Dorsolateral prefrontal cortex (tissue), 120 donors: ENCODE measurements at regions of chr11 and their contacts with region 1.

Region 1: GRCh38 chr11:95150946-95151684 is 61.5 kb downstream of the ENDOD1 start:
- DNase-seq: peak; percentile 89 to 95 (median 91)
- H3K4me3 ChIP-seq: peak overlapping the region; percentile 59 to 92 (median 74)
- H3K27ac ChIP-seq: peak overlapping the region; percentile 72 to 98 (median 93)
- H3K27me3 ChIP-seq: no peaks in the 10 kb centered on the region
- CTCF ChIP-seq: peak; percentile 73 to 99 (median 89)

Region 2: DNA sequence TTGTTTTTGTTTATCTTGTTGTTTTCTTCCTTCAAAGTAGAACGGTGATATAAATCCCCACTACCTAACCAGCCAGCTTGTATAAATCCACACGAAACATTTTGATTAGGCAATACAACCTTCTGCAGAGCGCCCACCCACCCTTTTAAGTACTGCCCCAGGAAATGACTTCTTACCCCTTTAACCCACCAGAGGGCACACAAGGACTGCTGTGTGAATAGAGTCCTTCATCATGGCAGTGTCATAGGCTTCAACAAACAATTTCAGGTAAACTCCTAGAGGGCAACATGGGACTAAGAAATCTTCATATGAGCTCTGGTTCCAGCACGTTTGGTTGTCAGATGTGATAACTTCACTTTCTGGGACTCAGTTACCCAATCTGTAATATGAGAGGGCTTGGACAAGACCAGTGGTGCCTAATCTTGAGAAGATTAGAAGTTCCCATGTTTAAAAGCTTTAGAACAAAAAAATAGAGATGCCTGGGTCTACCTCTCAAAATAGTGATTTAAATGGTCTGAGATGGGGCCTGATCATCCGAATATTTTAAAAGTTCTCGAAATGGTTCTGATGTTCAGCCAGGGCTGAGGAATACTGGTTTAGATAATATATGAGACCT is 527.9 kb before region 1 on chr11:
- intact Hi-C with region 1: loop called in 1 of 2 experiments (anchors 10 kb)
- DNase-seq: peak in 2 of 10 donors; percentile 41 to 42
- H3K4me3 ChIP-seq: no peak overlapping the region
- H3K27ac ChIP-seq: no peak overlapping the region
- H3K27me3 ChIP-seq: no peaks in the 10 kb centered on the region
- CTCF ChIP-seq: peak; percentile 41 to 87 (median 70)

Region 3: DNA sequence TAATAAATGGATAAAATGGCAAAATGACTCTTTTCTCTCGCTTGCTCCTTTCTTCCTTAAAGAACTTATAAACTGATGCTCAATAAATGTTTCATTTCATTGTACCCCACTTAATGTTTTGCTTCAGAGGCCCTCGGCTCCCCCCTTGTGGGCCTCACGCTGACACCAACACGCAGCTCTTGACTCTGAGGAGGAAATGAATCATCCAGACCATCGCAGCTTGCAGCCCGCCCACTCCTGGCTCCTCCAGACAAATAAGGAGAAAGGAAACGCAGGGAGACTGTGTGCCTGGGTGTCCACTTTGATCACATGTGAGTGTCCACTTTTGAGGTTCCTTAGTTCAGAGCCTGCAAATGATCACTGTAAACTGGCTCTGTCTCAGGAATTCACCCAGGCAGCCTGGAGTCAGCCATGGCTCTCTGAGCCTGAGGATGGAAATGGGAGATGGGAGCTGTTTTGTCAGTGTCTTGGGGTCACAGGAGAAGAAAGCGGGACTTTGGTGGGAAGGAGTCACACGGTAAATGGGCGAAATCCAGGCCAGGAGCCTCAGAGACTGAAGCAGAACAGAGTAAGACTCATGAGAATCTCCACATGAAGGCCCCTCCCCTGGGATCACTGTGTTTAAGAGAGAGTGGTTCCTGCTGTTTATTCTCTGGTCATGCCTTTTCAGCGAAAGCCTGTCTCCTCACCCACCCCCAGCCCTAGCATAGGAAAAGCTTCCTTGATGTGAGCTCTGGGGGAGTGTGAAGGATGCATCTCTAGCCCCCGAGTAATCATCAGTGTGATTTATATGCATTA is 274.3 kb before region 1 on chr11:
- intact Hi-C with region 1: no loop called
- DNase-seq: peak in 8 of 10 donors; percentile 62 to 82 (median 70)
- H3K4me3 ChIP-seq: no peak overlapping the region
- H3K27ac ChIP-seq: peak overlapping the region in 43 of 59 donors; percentile 1 to 84 (median 54)
- H3K27me3 ChIP-seq: no peaks in the 10 kb centered on the region
- CTCF ChIP-seq: peak in 16 of 56 donors; percentile 6 to 33 (median 20)

Region 4: DNA sequence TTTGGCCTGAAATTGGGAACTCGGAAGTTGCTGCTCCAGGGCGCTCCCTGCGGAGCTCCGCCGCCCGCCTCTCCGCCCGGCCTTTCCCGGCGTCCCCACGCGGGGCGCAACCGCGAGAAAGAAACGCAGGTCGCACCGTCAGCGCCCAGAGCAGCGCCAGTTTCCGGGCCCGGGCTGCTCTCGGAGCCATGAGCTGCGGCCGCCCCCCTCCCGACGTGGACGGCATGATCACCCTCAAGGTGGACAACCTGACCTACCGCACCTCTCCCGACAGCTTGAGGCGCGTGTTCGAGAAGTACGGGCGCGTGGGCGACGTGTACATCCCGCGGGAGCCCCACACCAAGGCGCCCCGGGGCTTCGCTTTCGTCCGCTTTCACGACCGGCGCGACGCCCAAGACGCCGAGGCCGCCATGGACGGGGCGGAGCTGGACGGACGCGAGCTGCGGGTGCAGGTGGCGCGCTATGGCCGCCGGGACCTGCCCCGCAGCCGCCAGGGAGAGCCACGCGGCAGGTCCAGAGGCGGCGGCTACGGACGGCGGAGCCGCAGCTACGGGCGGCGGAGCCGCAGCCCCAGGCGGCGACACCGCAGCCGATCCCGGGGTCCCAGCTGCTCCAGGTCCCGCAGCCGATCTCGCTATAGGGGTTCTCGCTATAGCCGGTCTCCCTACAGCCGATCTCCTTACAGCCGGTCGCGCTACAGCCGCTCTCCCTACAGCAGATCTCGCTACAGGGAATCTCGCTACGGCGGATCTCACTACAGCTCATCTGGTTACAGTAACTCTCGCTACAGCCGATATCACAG is 83.9 kb before region 1 on chr11:
- intact Hi-C with region 1: loop called (anchors 1 to 2 kb)
- DNase-seq: peak; percentile 73 to 89 (median 82)
- H3K4me3 ChIP-seq: peak overlapping the region; percentile 68 to 96 (median 83)
- H3K27ac ChIP-seq: peak overlapping the region; percentile 88 to 99 (median 96)
- H3K27me3 ChIP-seq: no peaks in the 10 kb centered on the region
- CTCF ChIP-seq: peak in 52 of 56 donors; percentile 20 to 66 (median 49)

Region 5: GRCh38 chr11:95231127-95231880 is 80.2 kb after region 1 on chr11 and contains the start of gene SESN3:
- intact Hi-C with region 1: loop called (anchors 2 to 5 kb)
- DNase-seq: peak; percentile 90 to 100 (median 98)
- H3K4me3 ChIP-seq: peak within 1 kb of the TSS; percentile 65 to 96 (median 87)
- H3K27ac ChIP-seq: peak within 1 kb of the TSS; percentile 59 to 99 (median 95)
- H3K27me3 ChIP-seq: no peaks in the 10 kb centered on the region
- CTCF ChIP-seq: peak in 32 of 56 donors; percentile 2 to 47 (median 22)
- total RNA-seq, gene SESN3: 59.6 to 186 (median 116) TPM

Region 6: GRCh38 chr11:95567685-95568084 is 416.6 kb after region 1 on chr11:
- intact Hi-C with region 1: loop called in 1 of 2 experiments (anchors 10 kb)
- DNase-seq: no peak
- H3K4me3 ChIP-seq: no peak overlapping the region
- H3K27ac ChIP-seq: peak overlapping the region in 2 of 59 donors; percentile 1 to 33
- H3K27me3 ChIP-seq: no peaks in the 10 kb centered on the region
- CTCF ChIP-seq: no peak

Region 7: DNA sequence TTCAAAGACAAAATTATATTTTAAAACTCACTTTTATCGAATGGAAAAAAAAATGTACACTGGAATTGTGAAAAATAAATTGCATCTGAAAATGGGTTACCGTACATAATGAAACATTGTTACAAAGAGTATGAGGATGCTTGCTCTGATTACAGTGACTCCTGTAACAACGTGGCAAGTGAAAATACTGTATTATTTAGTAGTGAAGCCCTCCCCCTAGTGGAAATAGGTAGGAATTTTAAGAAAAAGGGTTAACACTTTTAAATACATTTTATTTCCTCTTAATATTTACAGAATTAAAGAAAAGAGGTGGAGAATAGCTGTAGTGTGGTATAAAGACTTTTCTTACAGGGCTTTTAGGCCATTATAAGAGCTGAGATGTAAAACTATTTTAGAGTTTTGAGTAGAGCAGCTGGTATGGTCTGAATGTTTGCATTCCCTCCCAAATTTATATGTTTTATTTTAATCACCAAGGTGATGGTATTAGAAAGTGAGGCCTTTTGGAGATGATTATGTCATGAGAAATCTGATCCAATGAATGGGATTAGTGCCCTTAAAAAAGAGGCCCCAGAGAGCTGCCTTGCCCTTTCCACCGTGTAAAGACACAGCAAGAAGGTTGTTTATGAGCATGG is 613.3 kb after region 1 on chr11:
- intact Hi-C with region 1: loop called (anchors 1 to 5 kb)
- DNase-seq: no peak
- H3K4me3 ChIP-seq: peak overlapping the region in 2 of 59 donors; percentile 12 to 22
- H3K27ac ChIP-seq: no peak overlapping the region
- H3K27me3 ChIP-seq: no peaks in the 10 kb centered on the region
- CTCF ChIP-seq: peak; percentile 69 to 99 (median 85)